ENCODE measurements at regions of chr12 and their contacts with region 1.

Region 1: DNA sequence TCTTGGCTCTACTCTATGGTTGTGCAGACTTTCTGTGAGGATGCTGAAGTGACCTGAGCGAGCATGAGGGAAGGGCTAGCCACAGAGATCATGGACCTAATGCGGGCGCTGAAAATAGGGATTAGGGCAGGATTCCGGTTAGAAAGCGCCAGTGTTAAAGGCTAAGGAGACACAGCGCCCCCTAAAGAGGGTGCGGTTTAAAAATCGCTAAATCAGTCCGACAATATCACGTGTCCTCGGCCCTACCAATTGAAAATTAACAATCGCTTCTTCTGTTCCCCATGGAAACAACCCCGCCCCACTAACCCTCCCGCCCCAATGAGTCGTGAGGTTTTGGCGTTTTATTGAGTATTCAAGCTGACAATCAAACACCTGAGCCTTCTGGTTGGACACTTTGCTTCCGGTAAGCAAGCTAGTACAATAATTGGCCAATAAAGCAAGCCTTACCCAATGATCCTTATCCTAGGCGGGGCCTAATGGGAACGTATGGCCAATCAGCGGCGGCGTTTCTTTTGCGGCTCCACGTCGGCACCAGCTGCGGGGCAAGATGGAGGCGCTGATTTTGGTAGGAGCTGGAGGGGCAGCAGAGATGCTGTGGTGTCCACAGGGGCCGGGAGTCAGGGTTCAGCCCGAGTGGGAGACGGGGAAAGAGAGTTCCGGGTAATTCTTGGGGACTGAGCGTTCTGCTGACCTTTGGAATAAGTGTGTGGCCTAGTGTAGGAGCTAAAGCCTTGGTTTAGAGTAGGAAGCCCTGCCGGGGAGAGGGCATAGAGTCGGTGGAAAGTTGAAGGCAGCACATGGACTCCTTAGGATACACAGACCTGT is at the start of gene COPZ1:
- DNase-seq: peak; percentile 87 to 98 (median 91)
- ATAC-seq: peak; percentile 95
- H3K4me3 ChIP-seq: peak within 1 kb of the TSS; percentile 62 to 81
- H3K4me3 Mint-ChIP-seq: peak within 1 kb of the TSS; percentile 97
- H3K27ac ChIP-seq: peak within 1 kb of the TSS; percentile 79 to 82
- H3K27ac Mint-ChIP-seq: peak within 1 kb of the TSS; percentile 98
- H3K4me1 ChIP-seq: peaks cover 19% of the 10 kb centered on the region
- H3K4me1 Mint-ChIP-seq: peaks cover 36% of the 10 kb centered on the region
- H3K27me3 ChIP-seq: no peaks in the 10 kb centered on the region
- H3K27me3 Mint-ChIP-seq: no peaks in the 10 kb centered on the region
- CTCF ChIP-seq: peak; percentile 82
- total RNA-seq, gene COPZ1: 24.1 to 25.2 TPM

Region 2: GRCh38 chr12:54220092-54220557 is 104.7 kb before region 1 on chr12:
- CTCF ChIA-PET with region 1: no interaction called
- POLR2A ChIA-PET with region 1: no interaction called
- intact Hi-C with region 1: loop called in 1 of 2 experiments (anchors 1 kb)
- DNase-seq: peak; percentile 39 to 76 (median 62)
- ATAC-seq: peak; percentile 62
- H3K4me3 ChIP-seq: no peak overlapping the region
- H3K4me3 Mint-ChIP-seq: no peak overlapping the region
- H3K27ac ChIP-seq: no peak overlapping the region
- H3K27ac Mint-ChIP-seq: no peak overlapping the region
- H3K4me1 ChIP-seq: peaks cover 22% of the 10 kb centered on the region
- H3K4me1 Mint-ChIP-seq: peaks cover 26% of the 10 kb centered on the region
- H3K27me3 ChIP-seq: no peaks in the 10 kb centered on the region
- H3K27me3 Mint-ChIP-seq: peaks cover 8% of the 10 kb centered on the region
- CTCF ChIP-seq: peak; percentile 62

Region 3: DNA sequence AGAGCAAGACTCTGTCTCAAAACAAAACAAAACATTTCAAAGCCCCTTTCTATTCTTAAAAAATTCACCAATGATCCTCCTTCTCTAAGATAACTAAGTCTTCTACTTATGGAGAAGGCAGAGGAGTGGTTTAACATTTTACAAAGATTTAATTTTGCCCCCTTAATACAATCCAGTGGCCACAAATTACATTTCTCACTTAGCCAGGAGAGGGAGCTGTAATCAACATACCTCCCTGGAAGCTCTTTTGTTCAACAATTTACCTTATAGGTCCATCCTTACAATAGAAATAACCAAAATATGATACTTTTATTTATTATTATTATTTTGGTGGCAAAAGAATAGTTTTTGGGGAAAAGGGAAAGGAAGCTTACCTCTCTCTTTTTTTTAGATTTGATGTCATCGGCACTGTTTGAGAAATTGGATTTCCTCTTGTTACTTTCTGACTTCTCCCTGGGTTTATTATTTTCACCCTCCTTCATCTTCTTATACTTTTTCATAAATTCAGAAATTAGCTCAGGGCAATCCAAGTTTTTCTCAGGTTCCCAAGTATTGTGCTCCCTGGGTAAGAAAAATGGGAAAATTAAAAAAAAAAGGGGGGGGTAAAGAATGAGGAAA is 73.1 kb before region 1 on chr12:
- CTCF ChIA-PET with region 1: interaction called, 7 read pairs
- POLR2A ChIA-PET with region 1: no interaction called
- intact Hi-C with region 1: loop called (anchors 1 kb)
- DNase-seq: peak in 3 of 9 experiments; percentile 11 to 71 (median 60)
- ATAC-seq: peak; percentile 79
- H3K4me3 ChIP-seq: no peak overlapping the region
- H3K4me3 Mint-ChIP-seq: no peak overlapping the region
- H3K27ac ChIP-seq: no peak overlapping the region
- H3K27ac Mint-ChIP-seq: no peak overlapping the region
- H3K4me1 ChIP-seq: no peaks in the 10 kb centered on the region
- H3K4me1 Mint-ChIP-seq: peaks cover 11% of the 10 kb centered on the region
- H3K27me3 ChIP-seq: no peaks in the 10 kb centered on the region
- H3K27me3 Mint-ChIP-seq: no peaks in the 10 kb centered on the region
- CTCF ChIP-seq: peak; percentile 87

Region 4: GRCh38 chr12:54279866-54280467 is 44.9 kb before region 1 on chr12 and contains the start of gene CBX5:
- CTCF ChIA-PET with region 1: interaction called, 4 read pairs
- POLR2A ChIA-PET with region 1: interaction called, 28 read pairs
- intact Hi-C with region 1: loop called (anchors 1 kb)
- DNase-seq: peak; percentile 99 to 100 (median 100)
- ATAC-seq: peak; percentile 47
- H3K4me3 ChIP-seq: peak within 1 kb of the TSS; percentile 83 to 93
- H3K4me3 Mint-ChIP-seq: no peak within 1 kb of the TSS
- H3K27ac ChIP-seq: peak within 1 kb of the TSS; percentile 92 to 100
- H3K27ac Mint-ChIP-seq: no peak within 1 kb of the TSS
- H3K4me1 ChIP-seq: peaks cover 52% of the 10 kb centered on the region
- H3K4me1 Mint-ChIP-seq: peaks cover 14% of the 10 kb centered on the region
- H3K27me3 ChIP-seq: no peaks in the 10 kb centered on the region
- H3K27me3 Mint-ChIP-seq: no peaks in the 10 kb centered on the region
- CTCF ChIP-seq: no peak
- total RNA-seq, gene CBX5: 26.1 to 26.7 TPM

Region 5: GRCh38 chr12:54287261-54288157 is 37.3 kb before region 1 on chr12:
- CTCF ChIA-PET with region 1: interaction called, 42 read pairs
- POLR2A ChIA-PET with region 1: interaction called, 10 read pairs
- intact Hi-C with region 1: no loop called
- DNase-seq: no peak
- ATAC-seq: no peak
- H3K4me3 ChIP-seq: no peak overlapping the region
- H3K4me3 Mint-ChIP-seq: no peak overlapping the region
- H3K27ac ChIP-seq: no peak overlapping the region
- H3K27ac Mint-ChIP-seq: no peak overlapping the region
- H3K4me1 ChIP-seq: peaks cover 37% of the 10 kb centered on the region
- H3K4me1 Mint-ChIP-seq: peaks cover 25% of the 10 kb centered on the region
- H3K27me3 ChIP-seq: no peaks in the 10 kb centered on the region
- H3K27me3 Mint-ChIP-seq: no peaks in the 10 kb centered on the region
- CTCF ChIP-seq: no peak

Region 6: DNA sequence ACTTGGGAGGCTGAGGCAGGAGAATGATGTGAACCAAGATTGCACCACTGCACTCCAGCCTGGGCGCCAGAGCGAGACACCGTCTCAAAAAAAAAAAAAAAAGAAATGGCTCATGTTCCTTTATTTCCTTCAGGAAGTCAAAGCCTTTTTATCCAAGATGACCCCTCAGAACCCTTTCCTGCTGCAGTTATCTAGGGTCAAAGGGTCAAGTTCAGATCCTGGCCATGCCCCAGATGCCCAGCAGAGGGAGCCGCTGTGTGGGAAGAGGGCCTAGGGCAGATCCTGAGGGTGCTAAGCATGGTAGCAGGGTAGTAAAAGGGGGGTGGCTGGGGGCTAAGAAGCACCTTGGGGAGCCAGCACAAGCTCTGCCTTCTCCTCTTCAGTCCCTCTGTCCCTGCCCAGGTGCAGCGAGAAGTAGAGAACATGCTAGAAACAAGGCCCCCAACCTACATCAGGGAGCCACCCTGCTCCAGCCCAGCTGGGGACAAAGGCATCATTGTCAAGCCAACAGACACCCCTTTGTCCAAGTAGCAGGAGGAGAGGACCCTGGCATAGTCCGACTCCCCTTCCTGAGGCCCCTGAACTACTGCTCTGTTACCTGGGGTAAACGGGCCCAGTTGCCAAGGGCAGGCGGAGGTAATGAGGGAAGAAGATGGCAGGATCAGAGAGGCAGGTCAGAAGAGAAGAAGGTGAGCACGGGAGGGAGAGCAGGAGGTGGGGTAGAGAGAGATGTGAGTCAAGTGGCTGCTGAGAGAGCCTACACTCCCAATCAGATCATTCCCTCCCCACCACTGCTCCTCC is 30.5 kb before region 1 on chr12:
- CTCF ChIA-PET with region 1: interaction called, 42 read pairs
- POLR2A ChIA-PET with region 1: interaction called, 10 read pairs
- intact Hi-C with region 1: no loop called
- DNase-seq: peak in 8 of 9 experiments; percentile 38 to 72 (median 56)
- ATAC-seq: peak; percentile 77
- H3K4me3 ChIP-seq: no peak overlapping the region
- H3K4me3 Mint-ChIP-seq: no peak overlapping the region
- H3K27ac ChIP-seq: no peak overlapping the region
- H3K27ac Mint-ChIP-seq: no peak overlapping the region
- H3K4me1 ChIP-seq: peaks cover 3% of the 10 kb centered on the region
- H3K4me1 Mint-ChIP-seq: peaks cover 7% of the 10 kb centered on the region
- H3K27me3 ChIP-seq: peaks cover 0 to 2% of the 10 kb centered on the region in 2 experiments
- H3K27me3 Mint-ChIP-seq: peaks cover 13% of the 10 kb centered on the region
- CTCF ChIP-seq: peak; percentile 53

Region 7: GRCh38 chr12:54337280-54337842 is 12.5 kb after region 1 on chr12:
- CTCF ChIA-PET with region 1: interaction called, 11 read pairs
- POLR2A ChIA-PET with region 1: interaction called, 5 read pairs
- intact Hi-C with region 1: no loop called
- DNase-seq: no peak
- ATAC-seq: no peak
- H3K4me3 ChIP-seq: no peak overlapping the region
- H3K4me3 Mint-ChIP-seq: no peak overlapping the region
- H3K27ac ChIP-seq: no peak overlapping the region
- H3K27ac Mint-ChIP-seq: no peak overlapping the region
- H3K4me1 ChIP-seq: no peaks in the 10 kb centered on the region
- H3K4me1 Mint-ChIP-seq: peaks cover 25% of the 10 kb centered on the region
- H3K27me3 ChIP-seq: no peaks in the 10 kb centered on the region
- H3K27me3 Mint-ChIP-seq: no peaks in the 10 kb centered on the region
- CTCF ChIP-seq: no peak

Measured in CD8-positive, alpha-beta T cell (primary cell).